CD4-positive, alpha-beta T cell (primary cell): ENCODE measurements at regions of chr6 and their contacts with region 1.

Region 1: GRCh38 chr6:27753668-27754407 is 158.4 kb downstream of the OR2B2 start:
- DNase-seq: peak; percentile 31 to 81 (median 54)
- ATAC-seq: peak; percentile 11
- H3K4me3 ChIP-seq: peak overlapping the region; percentile 71
- H3K4me3 Mint-ChIP-seq: peak overlapping the region; percentile 97
- H3K27ac ChIP-seq: no peak overlapping the region
- H3K27ac Mint-ChIP-seq: peak overlapping the region; percentile 98
- H3K4me1 ChIP-seq: peaks cover 22% of the 10 kb centered on the region
- H3K4me1 Mint-ChIP-seq: peaks cover 41% of the 10 kb centered on the region
- H3K27me3 ChIP-seq: no peaks in the 10 kb centered on the region
- H3K27me3 Mint-ChIP-seq: peaks cover 10% of the 10 kb centered on the region
- CTCF ChIP-seq: no peak

Region 2: DNA sequence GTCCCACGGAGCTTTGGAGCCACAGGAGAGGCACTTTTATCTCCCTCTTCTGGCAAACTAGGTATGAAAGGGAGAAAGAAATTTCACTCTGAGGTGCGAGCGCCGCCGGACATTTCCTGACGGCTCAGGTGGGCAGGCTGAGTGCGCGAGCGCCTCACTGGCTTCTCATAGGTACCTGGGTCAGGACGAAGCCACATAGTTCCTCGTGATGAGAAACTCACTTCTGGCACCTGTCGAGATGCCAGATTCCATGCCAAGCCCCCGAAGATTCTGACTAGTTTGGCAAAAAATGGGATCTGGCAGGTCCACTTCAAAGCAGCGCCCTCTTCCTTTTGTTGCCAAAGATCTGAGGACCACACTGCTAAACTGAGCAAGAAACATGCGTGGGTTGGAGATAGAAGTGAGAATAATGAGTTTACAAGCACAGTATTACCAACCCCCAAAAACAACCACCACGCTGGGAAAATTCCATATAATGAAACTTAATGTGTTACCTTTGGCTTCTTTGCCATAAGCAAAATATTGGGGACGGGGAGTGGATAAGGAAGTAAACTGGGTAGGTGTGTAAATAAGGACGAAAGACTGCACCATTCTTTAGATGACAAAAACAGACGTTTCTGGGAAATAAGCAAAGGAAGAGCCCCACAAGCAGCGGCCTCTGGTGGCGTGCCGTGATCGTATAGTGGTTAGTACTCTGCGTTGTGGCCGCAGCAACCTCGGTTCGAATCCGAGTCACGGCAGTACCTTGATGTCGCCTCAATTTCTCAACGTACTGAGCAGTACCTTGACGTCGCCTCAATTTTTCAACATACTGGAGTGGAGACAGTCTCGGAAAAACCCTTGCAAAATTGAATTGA is 596.2 kb before region 1 on chr6:
- CTCF ChIA-PET with region 1: interaction called, 3 read pairs
- POLR2A ChIA-PET with region 1: interaction called, 3 read pairs
- intact Hi-C with region 1: loop called (anchors 1 to 5 kb)
- DNase-seq: peak; percentile 73 to 93 (median 85)
- ATAC-seq: peak; percentile 88
- H3K4me3 ChIP-seq: peak overlapping the region; percentile 59
- H3K4me3 Mint-ChIP-seq: peak overlapping the region; percentile 90
- H3K27ac ChIP-seq: peak overlapping the region in 1 of 2 donors; percentile 32
- H3K27ac Mint-ChIP-seq: peak overlapping the region; percentile 96
- H3K4me1 ChIP-seq: peaks cover 22% of the 10 kb centered on the region
- H3K4me1 Mint-ChIP-seq: peaks cover 44% of the 10 kb centered on the region
- H3K27me3 ChIP-seq: no peaks in the 10 kb centered on the region
- H3K27me3 Mint-ChIP-seq: peaks cover 7% of the 10 kb centered on the region
- CTCF ChIP-seq: peak; percentile 78

Region 3: GRCh38 chr6:27312146-27312949 is 441.5 kb before region 1 on chr6 and contains the start of gene POM121L2:
- CTCF ChIA-PET with region 1: interaction called, 6 read pairs
- POLR2A ChIA-PET with region 1: no interaction called
- intact Hi-C with region 1: loop called in 1 of 2 experiments (anchors 2 kb)
- DNase-seq: peak; percentile 23 to 81 (median 52)
- ATAC-seq: peak; percentile 66
- H3K4me3 ChIP-seq: peak within 1 kb of the TSS; percentile 71
- H3K4me3 Mint-ChIP-seq: peak within 1 kb of the TSS; percentile 83
- H3K27ac ChIP-seq: no peak within 1 kb of the TSS
- H3K27ac Mint-ChIP-seq: no peak within 1 kb of the TSS
- H3K4me1 ChIP-seq: peaks cover 12% of the 10 kb centered on the region
- H3K4me1 Mint-ChIP-seq: peaks cover 6% of the 10 kb centered on the region
- H3K27me3 ChIP-seq: peaks cover 35 to 68% of the 10 kb centered on the region in 2 experiments
- H3K27me3 Mint-ChIP-seq: peaks cover 93% of the 10 kb centered on the region
- CTCF ChIP-seq: peak; percentile 82
- total RNA-seq, gene POM121L2: not detected

Region 4: GRCh38 chr6:27472617-27473400 is 281.0 kb before region 1 on chr6 and contains the start of gene ZNF184:
- CTCF ChIA-PET with region 1: interaction called, 9 read pairs
- POLR2A ChIA-PET with region 1: interaction called, 17 read pairs
- intact Hi-C with region 1: loop called (anchors 2 kb)
- DNase-seq: peak; percentile 68 to 94 (median 80)
- ATAC-seq: peak; percentile 59
- H3K4me3 ChIP-seq: peak within 1 kb of the TSS; percentile 85
- H3K4me3 Mint-ChIP-seq: peak within 1 kb of the TSS; percentile 88
- H3K27ac ChIP-seq: peak within 1 kb of the TSS; percentile 88 to 96
- H3K27ac Mint-ChIP-seq: peak within 1 kb of the TSS; percentile 91
- H3K4me1 ChIP-seq: peaks cover 21% of the 10 kb centered on the region
- H3K4me1 Mint-ChIP-seq: peaks cover 53% of the 10 kb centered on the region
- H3K27me3 ChIP-seq: no peaks in the 10 kb centered on the region
- H3K27me3 Mint-ChIP-seq: no peaks in the 10 kb centered on the region
- CTCF ChIP-seq: no peak
- total RNA-seq, gene ZNF184: 19.6 to 21.1 TPM

Region 5: DNA sequence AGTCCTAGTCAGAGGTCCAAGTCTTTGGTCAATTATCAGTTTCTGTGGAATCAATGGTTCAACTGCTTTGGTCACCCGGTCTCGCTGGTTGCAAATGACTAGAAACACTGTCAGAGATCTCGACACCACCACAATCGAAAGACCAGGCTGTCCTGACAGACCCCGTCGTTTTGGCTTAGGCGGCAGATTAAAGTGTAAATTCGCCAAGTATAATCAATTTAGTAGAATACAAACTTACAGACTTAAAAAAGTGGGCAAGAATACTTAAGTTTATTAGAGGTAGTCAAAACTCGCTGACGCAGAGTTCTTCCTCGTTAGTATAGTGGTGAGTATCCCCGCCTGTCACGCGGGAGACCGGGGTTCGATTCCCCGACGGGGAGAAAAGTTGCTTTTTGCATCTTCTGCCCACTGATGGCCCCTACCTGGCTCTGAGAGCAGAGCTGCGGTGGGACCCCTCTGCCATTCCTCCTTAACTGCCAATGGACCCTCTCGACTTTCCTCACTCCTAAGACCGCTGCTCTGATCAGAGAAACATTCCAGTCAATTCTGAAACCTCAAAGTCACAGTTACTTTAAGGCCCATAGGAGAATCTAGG is 250.3 kb before region 1 on chr6:
- CTCF ChIA-PET with region 1: interaction called, 4 read pairs
- POLR2A ChIA-PET with region 1: interaction called, 6 read pairs
- intact Hi-C with region 1: loop called in 1 of 2 experiments (anchors 2 kb)
- DNase-seq: peak; percentile 59 to 89 (median 75)
- ATAC-seq: peak; percentile 58
- H3K4me3 ChIP-seq: peak overlapping the region; percentile 62
- H3K4me3 Mint-ChIP-seq: peak overlapping the region; percentile 95
- H3K27ac ChIP-seq: peak overlapping the region; percentile 2 to 33
- H3K27ac Mint-ChIP-seq: peak overlapping the region; percentile 94
- H3K4me1 ChIP-seq: peaks cover 15% of the 10 kb centered on the region
- H3K4me1 Mint-ChIP-seq: peaks cover 46% of the 10 kb centered on the region
- H3K27me3 ChIP-seq: peaks cover 0 to 11% of the 10 kb centered on the region in 2 experiments
- H3K27me3 Mint-ChIP-seq: peaks cover 40% of the 10 kb centered on the region
- CTCF ChIP-seq: no peak

Region 6: GRCh38 chr6:27687154-27688013 is 66.5 kb before region 1 on chr6:
- CTCF ChIA-PET with region 1: interaction called, 10 read pairs
- POLR2A ChIA-PET with region 1: interaction called, 6 read pairs
- intact Hi-C with region 1: loop called (anchors 1 kb)
- DNase-seq: peak; percentile 53 to 87 (median 68)
- ATAC-seq: peak; percentile 74
- H3K4me3 ChIP-seq: peak overlapping the region; percentile 88
- H3K4me3 Mint-ChIP-seq: peak overlapping the region; percentile 95
- H3K27ac ChIP-seq: peak overlapping the region in 1 of 2 donors; percentile 37
- H3K27ac Mint-ChIP-seq: peak overlapping the region; percentile 97
- H3K4me1 ChIP-seq: peaks cover 14% of the 10 kb centered on the region
- H3K4me1 Mint-ChIP-seq: peaks cover 38% of the 10 kb centered on the region
- H3K27me3 ChIP-seq: peaks cover 5 to 9% of the 10 kb centered on the region in 2 experiments
- H3K27me3 Mint-ChIP-seq: peaks cover 40% of the 10 kb centered on the region
- CTCF ChIP-seq: peak; percentile 66

Region 7: DNA sequence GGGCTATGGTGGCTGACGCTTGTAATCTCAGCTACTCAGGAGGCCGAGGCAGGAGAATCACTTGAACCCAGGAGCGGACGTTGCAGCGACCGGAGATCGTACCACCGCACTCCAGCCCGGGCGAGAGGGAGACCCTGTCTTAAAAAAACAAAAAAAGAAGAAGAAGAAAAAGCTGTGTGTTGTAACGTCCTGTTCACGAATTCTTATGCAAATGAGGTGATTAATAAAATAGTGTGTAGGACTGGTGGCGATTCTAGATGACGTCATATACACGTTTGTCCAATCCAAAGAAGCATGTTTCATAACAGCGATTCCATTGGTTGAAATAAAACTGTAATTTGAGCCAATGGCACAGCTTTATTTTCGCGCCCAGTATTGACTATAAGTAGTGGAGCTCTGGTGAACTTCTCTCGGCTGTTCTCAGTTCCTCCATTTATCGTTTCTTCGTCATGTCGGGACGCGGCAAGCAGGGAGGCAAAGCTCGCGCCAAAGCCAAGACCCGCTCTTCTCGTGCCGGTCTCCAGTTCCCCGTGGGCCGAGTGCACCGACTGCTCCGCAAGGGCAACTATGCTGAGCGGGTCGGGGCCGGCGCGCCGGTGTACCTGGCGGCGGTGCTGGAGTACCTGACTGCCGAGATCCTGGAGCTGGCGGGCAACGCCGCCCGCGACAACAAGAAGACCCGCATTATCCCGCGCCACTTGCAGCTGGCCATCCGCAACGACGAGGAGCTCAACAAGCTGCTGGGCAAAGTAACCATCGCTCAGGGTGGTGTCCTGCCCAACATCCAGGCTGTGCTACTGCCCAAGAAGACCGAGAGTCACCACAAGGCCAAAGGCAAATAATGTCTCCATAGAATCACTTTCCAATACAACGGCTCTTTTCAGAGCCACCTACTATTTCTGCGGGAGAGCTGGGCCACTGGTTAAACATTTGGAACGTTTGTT is 111.3 kb after region 1 on chr6:
- CTCF ChIA-PET with region 1: interaction called, 13 read pairs
- POLR2A ChIA-PET with region 1: interaction called, 5 read pairs
- intact Hi-C with region 1: no loop called
- DNase-seq: peak in 13 of 14 experiments; percentile 35 to 97 (median 61)
- ATAC-seq: peak; percentile 83
- H3K4me3 ChIP-seq: peak overlapping the region; percentile 59
- H3K4me3 Mint-ChIP-seq: peak overlapping the region; percentile 100
- H3K27ac ChIP-seq: peak overlapping the region; percentile 54 to 78
- H3K27ac Mint-ChIP-seq: peak overlapping the region; percentile 93
- H3K4me1 ChIP-seq: peaks cover 38% of the 10 kb centered on the region
- H3K4me1 Mint-ChIP-seq: peaks cover 41% of the 10 kb centered on the region
- H3K27me3 ChIP-seq: no peaks in the 10 kb centered on the region
- H3K27me3 Mint-ChIP-seq: peaks cover 3% of the 10 kb centered on the region
- CTCF ChIP-seq: no peak